HepG2 (cell line): ENCODE measurements at regions of chr15 and their contacts with region 1.

Region 1: GRCh38 chr15:78988361-78988911 is 43.6 kb upstream of the CTSH start:
- DNase-seq: peak; percentile 97
- ATAC-seq: peak; percentile 95
- H3K4me3 ChIP-seq: no peak overlapping the region
- H3K27ac ChIP-seq: peak overlapping the region; percentile 94
- H3K4me1 ChIP-seq: peaks cover 90% of the 10 kb centered on the region
- H3K27me3 ChIP-seq: no peaks in the 10 kb centered on the region
- CTCF ChIP-seq: no peak
- EP300 ChIP-seq: peak; percentile 46 to 88; a peak in 3 of 4 replicates
- POLR2A ChIP-seq: peak in 1 of 2 experiments; percentile 69; a peak in 1 of 4 replicates
- RAD21 ChIP-seq: peak; percentile 21; the same call in 1 of the 2 replicates

Region 2: DNA sequence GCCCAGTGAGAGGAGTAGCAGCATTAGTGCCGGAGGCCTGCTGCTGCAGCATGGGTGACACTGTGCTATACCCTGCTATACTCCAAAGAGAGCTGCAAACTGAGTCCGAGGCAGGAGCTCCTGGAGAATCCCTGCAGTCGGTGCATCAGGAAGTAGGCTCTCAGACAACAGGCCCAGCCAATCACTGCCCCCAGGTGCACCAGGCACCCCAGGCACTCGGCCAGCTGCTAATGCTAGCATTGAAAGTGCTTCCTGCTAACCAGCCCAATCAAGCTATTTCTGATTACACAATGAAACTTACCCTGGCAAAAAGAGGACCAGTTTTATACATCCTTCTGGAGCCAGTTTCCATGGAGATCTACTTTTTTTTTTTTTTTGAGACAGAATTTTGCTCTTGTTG is 596.0 kb before region 1 on chr15:
- CTCF ChIA-PET with region 1: no interaction called
- POLR2A ChIA-PET with region 1: no interaction called
- in situ Hi-C with region 1: no loop called
- intact Hi-C with region 1: no loop called
- DNase-seq: no peak
- ATAC-seq: no peak
- H3K4me3 ChIP-seq: no peak overlapping the region
- H3K27ac ChIP-seq: no peak overlapping the region
- H3K4me1 ChIP-seq: peaks cover 11% of the 10 kb centered on the region
- H3K27me3 ChIP-seq: peaks cover 0 to 5% of the 10 kb centered on the region in 2 experiments; a peak in 1 of 5 replicates
- CTCF ChIP-seq: no peak
- EP300 ChIP-seq: no peak
- POLR2A ChIP-seq: no peak
- RAD21 ChIP-seq: no peak

Region 3: GRCh38 chr15:78872972-78873792 is 115.3 kb before region 1 on chr15:
- CTCF ChIA-PET with region 1: no interaction called
- POLR2A ChIA-PET with region 1: interaction called, 10 read pairs
- in situ Hi-C with region 1: no loop called
- intact Hi-C with region 1: no loop called
- DNase-seq: peak; percentile 81
- ATAC-seq: peak; percentile 82
- H3K4me3 ChIP-seq: peak overlapping the region; percentile 97 to 100 (median 100)
- H3K27ac ChIP-seq: peak overlapping the region; percentile 100
- H3K4me1 ChIP-seq: peaks cover 56% of the 10 kb centered on the region
- H3K27me3 ChIP-seq: peaks cover 0 to 5% of the 10 kb centered on the region in 2 experiments; a peak in 2 of 5 replicates
- CTCF ChIP-seq: peak; percentile 79
- EP300 ChIP-seq: peak in 1 of 2 experiments; percentile 21; a peak in 1 of 4 replicates
- POLR2A ChIP-seq: peak; percentile 55 to 74
- RAD21 ChIP-seq: peak; percentile 33; the same call in 1 of the 2 replicates

Region 4: GRCh38 chr15:78944669-78945407 is 43.6 kb before region 1 on chr15 and contains the start of gene CTSH:
- CTCF ChIA-PET with region 1: no interaction called
- POLR2A ChIA-PET with region 1: interaction called, 20 read pairs
- in situ Hi-C with region 1: no loop called
- intact Hi-C with region 1: loop called (anchors 10 kb)
- DNase-seq: peak; percentile 84
- ATAC-seq: peak; percentile 87
- H3K4me3 ChIP-seq: peak within 1 kb of the TSS; percentile 75 to 93 (median 92)
- H3K27ac ChIP-seq: peak within 1 kb of the TSS; percentile 77
- H3K4me1 ChIP-seq: peaks cover 61% of the 10 kb centered on the region
- H3K27me3 ChIP-seq: no peaks in the 10 kb centered on the region; a peak in 2 of 5 replicates
- CTCF ChIP-seq: peak; percentile 33; the same call in 1 of the 2 replicates
- EP300 ChIP-seq: no peak
- POLR2A ChIP-seq: peak; percentile 42 to 90; a peak in 3 of 4 replicates
- RAD21 ChIP-seq: peak; percentile 46
- total RNA-seq, gene CTSH: 145 and 265 TPM in 2 replicates

Region 5: DNA sequence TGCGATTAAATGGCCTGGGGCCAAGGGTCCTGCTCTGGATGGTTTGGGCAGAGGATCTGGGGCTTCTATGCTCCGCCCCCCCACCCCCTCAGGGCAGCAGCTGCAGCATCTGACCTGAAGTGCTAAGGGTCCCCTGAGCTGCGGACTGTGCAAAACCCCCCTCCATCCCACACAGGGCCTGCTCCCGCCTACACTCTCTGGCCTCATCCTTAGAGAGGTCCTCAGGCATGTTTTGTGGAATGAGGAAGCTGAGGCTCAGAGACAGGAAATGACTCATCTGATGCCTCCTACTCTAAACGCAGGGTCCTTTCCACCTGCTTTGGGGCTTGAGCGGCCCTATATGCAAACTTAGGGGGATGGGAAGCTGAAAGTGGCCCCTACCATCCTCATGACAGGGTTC is 15.9 kb after region 1 on chr15:
- CTCF ChIA-PET with region 1: interaction called, 3 read pairs
- POLR2A ChIA-PET with region 1: interaction called, 26 read pairs
- in situ Hi-C with region 1: no loop called
- intact Hi-C with region 1: no loop called
- DNase-seq: peak; percentile 62
- ATAC-seq: peak; percentile 36; the same call in 2 of the 3 replicates
- H3K4me3 ChIP-seq: no peak overlapping the region
- H3K27ac ChIP-seq: no peak overlapping the region
- H3K4me1 ChIP-seq: peaks cover 38% of the 10 kb centered on the region
- H3K27me3 ChIP-seq: no peaks in the 10 kb centered on the region
- CTCF ChIP-seq: no peak
- EP300 ChIP-seq: no peak
- POLR2A ChIP-seq: no peak
- RAD21 ChIP-seq: no peak

Region 6: GRCh38 chr15:79028411-79028964 is 40.1 kb after region 1 on chr15:
- CTCF ChIA-PET with region 1: no interaction called
- POLR2A ChIA-PET with region 1: interaction called, 12 read pairs
- in situ Hi-C with region 1: no loop called
- intact Hi-C with region 1: no loop called
- DNase-seq: peak; percentile 63
- ATAC-seq: peak; percentile 55
- H3K4me3 ChIP-seq: no peak overlapping the region
- H3K27ac ChIP-seq: no peak overlapping the region
- H3K4me1 ChIP-seq: peaks cover 51% of the 10 kb centered on the region
- H3K27me3 ChIP-seq: no peaks in the 10 kb centered on the region
- CTCF ChIP-seq: peak; percentile 89
- EP300 ChIP-seq: no peak
- POLR2A ChIP-seq: no peak
- RAD21 ChIP-seq: peak; percentile 72